Panc1 (cell line): ENCODE measurements at regions of chr19 and their contacts with region 1.

Region 1: DNA sequence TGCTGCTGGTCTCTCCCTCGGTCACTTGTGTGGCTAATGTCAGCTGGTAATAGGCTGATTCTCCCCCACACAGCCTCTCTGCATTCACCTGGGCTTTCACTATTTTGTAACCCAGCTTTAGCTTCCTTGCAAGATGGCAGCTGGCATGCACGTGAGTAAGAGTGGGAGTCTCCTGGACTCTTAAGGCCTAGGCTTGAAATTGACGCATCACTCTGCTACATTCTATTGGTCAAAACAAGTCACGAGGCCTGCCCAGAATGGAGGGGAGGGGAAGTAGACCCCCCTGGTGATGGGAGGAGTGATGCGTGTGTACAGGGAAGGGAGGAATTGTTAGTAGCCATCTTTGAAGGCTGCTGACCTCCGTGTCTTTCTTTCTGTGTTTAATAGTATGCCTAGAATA is 24.9 kb upstream of the PNMA8B start:
- DNase-seq: no peak
- ATAC-seq: no peak
- H3K4me3 ChIP-seq: no peak overlapping the region
- H3K27ac ChIP-seq: no peak overlapping the region
- H3K4me1 ChIP-seq: no peaks in the 10 kb centered on the region
- H3K27me3 ChIP-seq: no peaks in the 10 kb centered on the region
- CTCF ChIP-seq: no peak

Region 2: GRCh38 chr19:46600384-46601317 is 80.0 kb after region 1 on chr19:
- CTCF ChIA-PET with region 1: no interaction called
- POLR2A ChIA-PET with region 1: no interaction called
- in situ Hi-C with region 1: no loop called
- intact Hi-C with region 1: no loop called
- DNase-seq: peak; percentile 78
- ATAC-seq: peak; percentile 94
- H3K4me3 ChIP-seq: peak overlapping the region; percentile 98 to 99
- H3K27ac ChIP-seq: peak overlapping the region; percentile 95
- H3K4me1 ChIP-seq: peaks cover 14% of the 10 kb centered on the region
- H3K27me3 ChIP-seq: no peaks in the 10 kb centered on the region
- CTCF ChIP-seq: no peak

Region 3: DNA sequence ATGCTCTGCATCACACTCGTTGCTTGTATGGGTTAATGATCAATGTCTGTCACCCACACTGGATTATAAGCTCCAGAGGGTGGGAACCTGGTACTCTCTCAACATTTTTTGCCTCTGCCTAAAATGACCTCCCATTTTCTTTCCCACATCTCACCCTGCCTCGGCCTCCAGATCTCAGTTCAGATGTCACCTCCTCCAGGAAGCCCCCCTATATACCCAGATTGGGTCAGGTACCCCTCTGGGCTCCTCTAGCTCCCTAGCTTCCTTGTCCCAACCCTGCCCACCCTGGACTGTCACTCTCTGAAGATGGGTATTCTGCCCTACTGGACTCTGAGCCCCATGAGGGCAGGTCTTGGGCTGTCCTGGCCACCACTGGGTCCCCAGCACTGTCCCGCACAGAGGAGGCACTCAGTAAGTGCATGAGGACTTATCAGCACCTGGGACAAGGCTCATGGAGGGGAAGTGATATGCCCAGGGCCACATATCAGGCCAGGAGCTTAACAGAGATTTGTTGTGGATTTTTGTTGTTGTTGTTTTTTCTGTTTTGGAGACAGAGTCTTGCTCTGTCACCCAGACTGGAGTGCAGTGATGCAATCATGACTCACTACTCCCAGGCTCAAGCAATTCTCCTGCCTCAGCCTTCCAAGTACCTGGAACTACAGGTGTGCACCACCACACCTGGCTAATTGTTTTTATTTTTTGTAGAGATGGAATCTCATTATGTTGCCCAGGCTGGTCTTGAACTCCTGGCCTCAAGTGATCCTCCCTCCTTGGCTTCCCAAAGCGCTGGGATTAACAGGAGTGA is 172.5 kb after region 1 on chr19:
- CTCF ChIA-PET with region 1: no interaction called
- POLR2A ChIA-PET with region 1: interaction called, 12 read pairs
- in situ Hi-C with region 1: no loop called
- intact Hi-C with region 1: no loop called
- DNase-seq: no peak
- ATAC-seq: no peak
- H3K4me3 ChIP-seq: no peak overlapping the region
- H3K27ac ChIP-seq: no peak overlapping the region
- H3K4me1 ChIP-seq: no peaks in the 10 kb centered on the region
- H3K27me3 ChIP-seq: no peaks in the 10 kb centered on the region
- CTCF ChIP-seq: no peak